Motor neuron (in vitro differentiated cells): ENCODE measurements at regions of chr1 and their contacts with region 1.

Region 1: GRCh38 chr1:159991513-159991912 is 37.5 kb upstream of the SLAMF9 start:
- ATAC-seq: peak in 1 of 8 experiments; percentile 50
- H3K4me3 ChIP-seq: no peak overlapping the region
- H3K27ac ChIP-seq: no peak overlapping the region
- H3K4me1 ChIP-seq: peaks cover 0 to 4% of the 10 kb centered on the region in 2 donors

Region 2: DNA sequence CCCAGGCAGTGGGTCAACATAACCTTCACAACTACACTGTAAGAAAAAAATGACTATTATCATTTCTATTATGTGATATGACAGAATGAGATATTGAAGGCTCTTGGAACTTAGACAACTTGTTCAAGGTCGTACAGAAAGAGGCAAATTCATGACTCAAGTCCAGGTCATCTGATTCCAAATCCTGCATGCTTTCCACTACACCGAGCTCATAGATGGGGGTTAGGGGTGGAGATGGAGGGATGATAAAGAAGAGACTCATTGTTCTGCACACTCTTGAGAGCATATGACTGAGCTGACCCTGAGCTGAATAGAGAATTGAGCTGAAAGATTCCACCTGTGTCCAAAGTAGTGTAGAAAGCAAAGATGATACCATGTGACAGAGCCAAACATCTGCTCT is 186.6 kb before region 1 on chr1:
- in situ Hi-C with region 1: no loop called
- ATAC-seq: no peak
- H3K4me3 ChIP-seq: no peak overlapping the region
- H3K27ac ChIP-seq: no peak overlapping the region
- H3K4me1 ChIP-seq: no peaks in the 10 kb centered on the region

Region 3: DNA sequence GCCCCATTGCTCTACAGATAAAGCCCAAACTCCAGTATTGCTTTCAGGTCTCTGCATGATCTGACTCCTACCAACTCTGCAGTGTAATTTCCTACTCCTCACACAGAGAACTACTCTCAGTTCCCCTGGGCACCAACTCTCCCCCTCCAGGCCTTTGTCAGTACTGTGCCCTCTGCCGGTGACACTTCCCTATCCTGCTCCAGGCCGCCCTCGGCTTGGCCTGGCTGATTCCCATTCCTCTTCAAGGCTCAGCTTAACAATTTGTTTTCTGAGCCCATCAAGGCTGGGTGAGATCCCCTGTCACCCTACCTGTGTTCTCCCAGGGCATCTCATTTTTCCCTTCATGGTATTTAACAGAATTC is 162.3 kb before region 1 on chr1:
- in situ Hi-C with region 1: loop called in 1 of 9 experiments (anchors 25 kb)
- ATAC-seq: peak in 5 of 8 experiments; percentile 32 to 61 (median 59)
- H3K4me3 ChIP-seq: no peak overlapping the region
- H3K27ac ChIP-seq: no peak overlapping the region
- H3K4me1 ChIP-seq: peaks cover 0 to 2% of the 10 kb centered on the region in 2 donors

Region 4: GRCh38 chr1:160193091-160193819 is 201.7 kb after region 1 on chr1:
- in situ Hi-C with region 1: no loop called
- ATAC-seq: peak; percentile 85 to 94 (median 93)
- H3K4me3 ChIP-seq: no peak overlapping the region
- H3K27ac ChIP-seq: peak overlapping the region; percentile 40 to 52
- H3K4me1 ChIP-seq: peaks cover 17 to 23% of the 10 kb centered on the region in 2 donors

Region 5: GRCh38 chr1:160534823-160535605 is 543.5 kb after region 1 on chr1:
- in situ Hi-C with region 1: no loop called
- ATAC-seq: no peak
- H3K4me3 ChIP-seq: no peak overlapping the region
- H3K27ac ChIP-seq: no peak overlapping the region
- H3K4me1 ChIP-seq: no peaks in the 10 kb centered on the region

Region 6: GRCh38 chr1:160625725-160626498 is 634.4 kb after region 1 on chr1:
- in situ Hi-C with region 1: no loop called
- ATAC-seq: no peak
- H3K4me3 ChIP-seq: no peak overlapping the region
- H3K27ac ChIP-seq: no peak overlapping the region
- H3K4me1 ChIP-seq: peaks cover 10 to 15% of the 10 kb centered on the region in 2 donors